Activated CD8-positive, alpha-beta T cell treated with anti-CD3 and anti-CD28 coated beads for 36 hours (primary cell): ENCODE measurements at regions of chr1 and their contacts with region 1.

Region 1: GRCh38 chr1:42681741-42682483 is at the start of gene YBX1:
- DNase-seq: peak; percentile 96
- ATAC-seq: peak; percentile 95
- H3K4me3 Mint-ChIP-seq: peak within 1 kb of the TSS; percentile 98
- H3K27ac Mint-ChIP-seq: peak within 1 kb of the TSS; percentile 94
- H3K4me1 Mint-ChIP-seq: peaks cover 40% of the 10 kb centered on the region
- H3K27me3 Mint-ChIP-seq: no peaks in the 10 kb centered on the region
- CTCF ChIP-seq: no peak
- total RNA-seq, gene YBX1: 1,417 to 1,447 TPM

Region 2: GRCh38 chr1:42462828-42463763 is 218.8 kb before region 1 on chr1 and contains the start of gene CCDC30:
- CTCF ChIA-PET with region 1: no interaction called
- POLR2A ChIA-PET with region 1: interaction called, 12 read pairs
- intact Hi-C with region 1: no loop called
- DNase-seq: peak; percentile 98
- ATAC-seq: peak; percentile 100
- H3K4me3 Mint-ChIP-seq: peak within 1 kb of the TSS; percentile 78
- H3K27ac Mint-ChIP-seq: peak within 1 kb of the TSS; percentile 78
- H3K4me1 Mint-ChIP-seq: peaks cover 32% of the 10 kb centered on the region
- H3K27me3 Mint-ChIP-seq: no peaks in the 10 kb centered on the region
- CTCF ChIP-seq: no peak
- total RNA-seq, gene CCDC30: 0.60 to 3.0 TPM

Region 3: DNA sequence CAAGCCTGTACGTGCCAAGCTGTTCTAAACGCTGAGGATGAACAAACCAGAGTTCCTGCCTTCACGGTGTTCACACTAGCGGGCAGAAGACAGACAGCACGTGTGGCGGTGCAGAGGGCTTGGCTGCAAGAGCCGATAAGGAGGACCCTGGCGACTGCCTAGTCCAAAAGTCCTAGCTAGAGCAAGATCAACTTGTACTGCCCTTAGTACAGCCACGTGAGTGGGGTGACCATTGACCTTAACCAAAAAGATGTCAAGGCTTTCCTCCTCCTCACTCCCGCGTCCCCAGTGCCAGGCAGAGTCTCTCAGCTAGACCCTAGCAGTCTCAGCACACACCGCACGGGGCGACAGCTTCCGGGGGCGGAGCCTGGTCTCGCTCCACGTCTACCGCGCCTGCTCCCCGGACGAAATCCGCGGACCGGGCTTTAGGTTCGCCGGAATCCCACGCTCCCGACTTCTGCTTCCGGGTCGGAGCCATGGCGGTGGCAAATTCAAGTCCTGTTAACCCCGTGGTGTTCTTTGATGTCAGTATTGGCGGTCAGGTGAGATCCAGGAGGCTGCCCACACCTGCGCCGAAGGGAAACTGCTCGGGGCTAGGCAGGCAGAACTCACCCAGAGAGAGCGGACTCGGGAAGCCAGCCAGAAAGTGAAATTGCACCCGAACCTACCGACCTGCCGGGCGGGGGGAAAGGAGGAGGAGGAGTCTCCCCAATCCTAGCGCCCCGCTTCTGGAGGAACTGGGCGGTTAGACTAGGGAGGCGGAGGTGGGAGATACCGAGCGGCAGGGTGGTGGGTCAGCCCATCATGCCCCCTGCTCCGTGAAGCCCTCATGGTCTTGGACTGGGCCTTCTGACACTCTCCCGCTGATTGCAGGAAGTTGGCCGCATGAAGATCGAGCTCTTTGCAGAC is 23.7 kb before region 1 on chr1 and contains the start of gene PPIH:
- CTCF ChIA-PET with region 1: interaction called, 8 read pairs
- POLR2A ChIA-PET with region 1: interaction called, 151 read pairs
- intact Hi-C with region 1: no loop called
- DNase-seq: peak; percentile 97
- ATAC-seq: peak; percentile 98
- H3K4me3 Mint-ChIP-seq: peak within 1 kb of the TSS; percentile 90
- H3K27ac Mint-ChIP-seq: peak within 1 kb of the TSS; percentile 98
- H3K4me1 Mint-ChIP-seq: peaks cover 32% of the 10 kb centered on the region
- H3K27me3 Mint-ChIP-seq: no peaks in the 10 kb centered on the region
- CTCF ChIP-seq: peak; percentile 24
- total RNA-seq, gene PPIH: 105 TPM

Region 4: DNA sequence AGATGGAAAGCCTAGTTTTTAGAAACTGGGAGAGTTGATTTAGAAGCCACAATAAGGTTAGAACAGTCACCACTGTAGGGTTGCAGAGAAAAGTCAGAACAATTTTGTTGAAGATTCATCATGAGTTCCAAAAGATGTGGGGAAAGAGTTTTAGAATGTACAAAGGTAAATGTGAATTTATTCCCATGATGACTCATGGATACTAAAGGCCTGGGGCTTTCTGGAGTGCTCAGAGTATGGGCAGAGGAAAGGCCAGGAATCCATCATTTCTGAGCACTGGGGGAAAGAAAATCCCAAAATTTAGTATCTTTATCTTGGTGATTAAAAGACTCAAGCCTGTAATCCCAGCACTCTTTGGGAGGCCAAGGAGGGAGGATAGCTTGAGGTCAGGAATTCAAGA is 18.1 kb after region 1 on chr1:
- CTCF ChIA-PET with region 1: interaction called, 4 read pairs
- POLR2A ChIA-PET with region 1: interaction called, 54 read pairs
- intact Hi-C with region 1: no loop called
- DNase-seq: no peak
- ATAC-seq: no peak
- H3K4me3 Mint-ChIP-seq: no peak overlapping the region
- H3K27ac Mint-ChIP-seq: peak overlapping the region; percentile 68
- H3K4me1 Mint-ChIP-seq: peaks cover 16% of the 10 kb centered on the region
- H3K27me3 Mint-ChIP-seq: no peaks in the 10 kb centered on the region
- CTCF ChIP-seq: no peak